Spleen (tissue), 13 donors: ENCODE measurements at regions of chr9 and their contacts with region 1.

Region 1: DNA sequence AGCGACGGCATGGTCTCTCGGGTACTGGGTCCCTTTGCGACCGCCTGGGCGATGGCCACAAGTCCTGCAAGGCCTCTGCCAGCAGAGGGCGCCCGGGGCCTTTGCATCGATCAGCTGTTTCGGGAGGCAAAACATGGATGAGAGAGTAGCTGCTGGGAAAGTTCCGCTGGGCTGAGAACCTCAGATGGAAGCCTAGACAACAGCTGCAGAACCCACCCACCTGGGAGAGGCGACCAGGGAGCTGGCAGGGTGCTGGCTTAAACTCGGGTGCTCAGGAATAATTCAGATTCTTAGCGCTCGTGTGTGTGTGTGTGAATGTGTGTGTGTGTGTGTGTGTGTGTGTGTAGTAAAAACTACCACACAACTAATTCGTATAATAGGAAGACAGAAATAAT is 50.0 kb downstream of the TRIM32 start:
- DNase-seq: peak; percentile 86
- H3K4me3 ChIP-seq: no peak overlapping the region
- H3K27ac ChIP-seq: no peak overlapping the region
- H3K4me1 ChIP-seq: peaks cover 0 to 7% (median 2%) of the 10 kb centered on the region in 6 donors
- H3K27me3 ChIP-seq: peaks cover 0 to 10% (median 0%) of the 10 kb centered on the region in 7 donors
- CTCF ChIP-seq: peak; percentile 32 to 84 (median 73)
- POLR2A ChIP-seq: no peak

Region 2: GRCh38 chr9:116860509-116861120 is 123.5 kb after region 1 on chr9:
- intact Hi-C with region 1: loop called (anchors 5 kb)
- DNase-seq: no peak
- H3K4me3 ChIP-seq: no peak overlapping the region
- H3K27ac ChIP-seq: no peak overlapping the region
- H3K4me1 ChIP-seq: peaks cover 0 to 5% (median 0%) of the 10 kb centered on the region in 6 donors
- H3K27me3 ChIP-seq: peaks cover 0 to 4% (median 0%) of the 10 kb centered on the region in 7 donors
- CTCF ChIP-seq: peak in 9 of 11 experiments; percentile 50 to 75 (median 62)
- POLR2A ChIP-seq: no peak

Region 3: DNA sequence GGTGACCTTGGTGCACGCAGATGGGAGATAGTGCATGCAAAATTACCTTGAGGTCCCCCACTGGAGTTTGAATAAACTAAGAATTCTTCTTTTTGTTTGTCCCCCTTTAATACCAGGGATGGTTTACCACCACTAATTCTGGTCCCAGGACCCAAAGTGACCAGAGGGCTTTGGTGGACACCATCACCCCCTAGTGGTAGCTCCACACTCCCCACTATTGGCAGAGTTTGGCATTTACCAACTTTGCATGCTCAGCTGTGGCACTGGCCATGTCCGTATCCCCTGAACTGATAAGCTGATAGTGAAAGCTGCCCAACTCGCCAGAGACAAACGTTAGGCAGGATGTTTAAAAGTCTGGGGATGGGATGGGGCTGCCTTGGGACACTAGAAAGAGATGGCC is 674.4 kb after region 1 on chr9:
- intact Hi-C with region 1: loop called (anchors 10 kb)
- DNase-seq: no peak
- H3K4me3 ChIP-seq: peak overlapping the region in 1 of 8 donors; percentile 32
- H3K27ac ChIP-seq: no peak overlapping the region
- H3K4me1 ChIP-seq: peaks cover 0 to 39% (median 17%) of the 10 kb centered on the region in 6 donors
- H3K27me3 ChIP-seq: peaks cover 4 to 56% (median 45%) of the 10 kb centered on the region in 7 donors
- CTCF ChIP-seq: peak in 9 of 11 experiments; percentile 21 to 66 (median 59)
- POLR2A ChIP-seq: no peak